ENCODE measurements at regions of chr17 and their contacts with region 1.

Region 1: DNA sequence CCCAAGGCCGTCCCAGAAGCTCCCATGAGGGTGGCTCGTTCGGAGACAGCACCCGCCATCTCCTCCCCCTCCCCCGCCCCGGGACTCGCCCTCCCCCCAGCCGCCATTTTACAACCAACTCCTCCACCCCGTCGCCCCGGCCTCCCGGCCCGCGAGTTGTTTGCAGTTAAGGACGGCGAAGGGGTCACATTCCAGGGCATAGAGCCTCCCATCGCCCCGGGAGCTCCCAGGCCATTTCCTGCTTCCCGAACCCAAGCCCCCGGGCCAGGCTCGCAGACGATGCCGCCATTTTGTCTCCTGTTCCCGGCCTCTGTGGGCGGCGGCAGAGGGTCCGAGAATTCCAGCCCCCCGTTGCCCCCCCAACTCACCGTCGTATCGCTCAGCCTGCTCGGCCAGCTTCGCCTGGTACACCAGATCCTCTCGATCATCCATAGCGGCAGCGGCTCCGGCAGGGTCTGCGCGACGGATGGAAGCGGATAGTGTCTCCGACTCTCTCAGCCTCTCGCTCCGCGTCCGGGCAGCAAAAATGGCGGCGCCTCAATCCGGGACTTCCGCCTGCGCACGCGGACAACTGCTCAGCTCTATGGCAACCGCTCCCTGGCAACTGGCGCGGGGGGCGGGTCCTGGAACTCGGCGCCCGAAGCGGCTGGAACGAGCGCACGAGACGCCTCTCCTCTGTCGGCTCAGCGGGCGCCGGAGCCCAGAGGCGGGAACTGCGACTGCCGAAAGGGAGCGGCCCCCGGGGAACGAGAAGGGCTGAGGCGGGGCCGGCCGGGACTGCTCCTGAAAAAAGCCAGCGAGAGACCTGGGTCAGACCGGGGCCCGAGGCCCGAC is at the start of gene YWHAE:
- DNase-seq: peak; percentile 96
- H3K4me3 ChIP-seq: peak within 1 kb of the TSS; percentile 79 to 81 (median 80)
- H3K27ac ChIP-seq: peak within 1 kb of the TSS; percentile 95 to 99
- H3K4me1 ChIP-seq: peaks cover 0 to 12% of the 10 kb centered on the region in 2 donors
- H3K27me3 ChIP-seq: no peaks in the 10 kb centered on the region
- CTCF ChIP-seq: peak in 1 of 3 donors; percentile 25
- POLR2A ChIP-seq: peak; percentile 98
- total RNA-seq, gene YWHAE: 481 to 610 (median 518) TPM

Region 2: GRCh38 chr17:1351971-1352370 is 47.9 kb before region 1 on chr17:
- intact Hi-C with region 1: no loop called
- DNase-seq: no peak
- H3K4me3 ChIP-seq: no peak overlapping the region
- H3K27ac ChIP-seq: no peak overlapping the region
- H3K4me1 ChIP-seq: no peaks in the 10 kb centered on the region
- H3K27me3 ChIP-seq: no peaks in the 10 kb centered on the region
- CTCF ChIP-seq: no peak
- POLR2A ChIP-seq: no peak

Region 3: DNA sequence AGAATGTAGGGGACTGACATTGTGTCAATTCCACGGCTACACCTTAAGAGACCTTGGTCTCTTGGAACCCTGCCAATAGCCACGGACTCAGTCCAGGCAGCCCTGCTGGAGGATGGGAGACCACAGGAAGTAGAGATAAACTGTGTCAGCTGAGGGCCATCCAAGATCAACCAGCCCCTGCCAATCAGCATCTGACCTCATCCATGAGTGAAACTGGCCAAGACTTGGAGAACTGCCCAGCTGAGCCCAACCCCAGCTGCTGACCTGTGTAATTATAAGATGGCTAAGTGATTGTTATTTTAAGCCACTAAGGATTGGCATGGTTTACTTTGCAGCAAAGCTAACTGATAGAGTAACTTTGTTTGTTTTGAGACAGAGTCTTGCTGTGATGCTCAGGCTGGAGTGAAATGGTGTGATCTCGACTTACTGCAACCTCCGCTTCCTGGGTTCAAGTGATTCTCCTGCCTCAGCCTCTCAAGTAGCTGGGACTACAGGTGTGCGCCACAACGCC is 13.4 kb after region 1 on chr17:
- intact Hi-C with region 1: no loop called
- DNase-seq: no peak
- H3K4me3 ChIP-seq: no peak overlapping the region
- H3K27ac ChIP-seq: no peak overlapping the region
- H3K4me1 ChIP-seq: no peaks in the 10 kb centered on the region
- H3K27me3 ChIP-seq: no peaks in the 10 kb centered on the region
- CTCF ChIP-seq: no peak
- POLR2A ChIP-seq: no peak

Region 4: DNA sequence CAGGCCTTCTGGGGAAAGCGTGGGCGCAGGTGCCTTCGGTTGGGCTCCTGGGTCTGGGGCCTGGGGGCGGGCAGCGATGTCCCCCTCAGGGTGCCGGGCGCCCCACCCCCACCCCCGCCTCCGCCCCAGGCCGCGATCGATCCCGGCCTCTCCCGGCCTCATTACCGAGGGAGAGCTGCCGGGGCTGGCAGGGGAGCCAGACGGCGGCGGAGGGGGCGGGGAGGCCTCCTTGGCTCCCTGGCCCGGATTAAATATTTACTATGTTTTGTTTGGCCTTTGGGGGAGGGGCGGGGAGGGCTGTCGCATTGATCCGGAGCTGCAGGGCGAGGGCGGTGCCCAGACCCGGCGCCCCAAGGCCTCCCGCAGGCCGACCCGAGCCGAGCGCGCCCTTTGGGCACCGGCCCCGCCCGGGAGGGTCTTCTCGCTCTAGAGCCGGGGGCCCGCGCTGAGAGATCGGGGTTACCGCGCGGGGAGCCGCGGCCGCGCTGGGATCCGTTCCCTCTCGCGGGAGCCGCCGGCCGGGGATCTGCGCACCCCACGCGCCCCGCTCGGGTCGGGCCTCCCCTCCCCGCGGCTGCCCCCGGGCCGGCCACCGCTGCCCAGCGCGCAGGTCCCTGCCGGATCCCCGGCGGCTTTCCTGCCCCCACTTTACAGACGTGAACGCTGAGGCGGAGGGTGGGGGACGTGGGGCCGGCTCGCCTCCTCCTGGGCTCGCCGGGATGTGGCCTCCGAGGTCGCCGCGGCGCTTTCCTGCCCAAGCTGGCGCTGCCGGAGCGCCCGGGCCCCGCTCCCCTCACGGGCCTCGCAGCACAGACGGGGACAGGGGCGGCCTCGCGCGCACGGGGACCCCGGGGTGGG is 598.3 kb after region 1 on chr17:
- intact Hi-C with region 1: no loop called
- DNase-seq: peak in 1 of 2 donors; percentile 78
- H3K4me3 ChIP-seq: peak overlapping the region; percentile 55 to 83 (median 59)
- H3K27ac ChIP-seq: peak overlapping the region; percentile 89
- H3K4me1 ChIP-seq: peaks cover 6 to 21% of the 10 kb centered on the region in 2 donors
- H3K27me3 ChIP-seq: no peaks in the 10 kb centered on the region
- CTCF ChIP-seq: no peak
- POLR2A ChIP-seq: no peak

Region 5: GRCh38 chr17:2011411-2012371 is 611.8 kb after region 1 on chr17:
- intact Hi-C with region 1: loop called (anchors 5 kb)
- DNase-seq: peak; percentile 82 to 84
- H3K4me3 ChIP-seq: peak overlapping the region in 2 of 3 donors; percentile 35 to 57
- H3K27ac ChIP-seq: peak overlapping the region; percentile 83 to 92
- H3K4me1 ChIP-seq: peaks cover 4% of the 10 kb centered on the region in 2 donors
- H3K27me3 ChIP-seq: no peaks in the 10 kb centered on the region
- CTCF ChIP-seq: no peak
- POLR2A ChIP-seq: no peak

Measured in breast epithelium (tissue), 4 donors.